ENCODE measurements at regions of chr4 and their contacts with region 1.

Region 1: GRCh38 chr4:1167247-1167949 is 5.0 kb downstream of the SPON2 start:
- DNase-seq: peak; percentile 21
- H3K4me3 ChIP-seq: peak overlapping the region; percentile 70
- CTCF ChIP-seq: peak; percentile 94

Region 2: DNA sequence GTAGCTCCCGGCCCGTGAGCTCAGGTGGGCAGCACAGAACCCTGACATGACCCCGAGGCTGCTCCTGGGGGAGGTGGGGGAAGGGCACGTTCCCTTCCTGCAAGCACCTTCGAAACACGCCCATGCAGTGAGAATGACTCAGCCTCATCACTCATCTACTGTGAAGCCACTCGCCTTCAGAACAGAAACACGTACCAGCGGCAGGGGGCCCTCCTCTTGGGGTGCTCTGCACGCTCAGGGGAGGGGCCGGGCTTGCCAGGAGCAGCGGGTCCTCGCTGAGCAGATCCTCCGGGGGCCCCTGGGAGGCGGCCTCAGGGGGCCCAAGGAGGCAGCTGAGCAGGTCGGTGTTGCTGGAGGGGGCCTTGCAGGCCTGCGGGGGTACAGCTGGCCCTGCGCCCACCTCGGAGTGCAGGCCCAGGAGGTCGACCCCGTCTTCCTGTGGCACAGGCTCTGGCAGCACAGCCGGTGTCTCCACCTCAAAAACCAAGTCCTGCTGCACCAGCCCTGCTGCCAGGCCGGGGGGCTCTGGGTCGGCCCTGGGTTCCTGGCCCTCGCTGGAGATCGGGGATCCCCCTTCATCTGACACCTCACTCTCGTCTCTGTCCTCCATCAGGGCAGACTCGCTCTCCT is 300.5 kb before region 1 on chr4:
- CTCF ChIA-PET with region 1: no interaction called
- POLR2A ChIA-PET with region 1: no interaction called
- DNase-seq: no peak
- H3K4me3 ChIP-seq: no peak overlapping the region
- CTCF ChIP-seq: no peak

Region 3: DNA sequence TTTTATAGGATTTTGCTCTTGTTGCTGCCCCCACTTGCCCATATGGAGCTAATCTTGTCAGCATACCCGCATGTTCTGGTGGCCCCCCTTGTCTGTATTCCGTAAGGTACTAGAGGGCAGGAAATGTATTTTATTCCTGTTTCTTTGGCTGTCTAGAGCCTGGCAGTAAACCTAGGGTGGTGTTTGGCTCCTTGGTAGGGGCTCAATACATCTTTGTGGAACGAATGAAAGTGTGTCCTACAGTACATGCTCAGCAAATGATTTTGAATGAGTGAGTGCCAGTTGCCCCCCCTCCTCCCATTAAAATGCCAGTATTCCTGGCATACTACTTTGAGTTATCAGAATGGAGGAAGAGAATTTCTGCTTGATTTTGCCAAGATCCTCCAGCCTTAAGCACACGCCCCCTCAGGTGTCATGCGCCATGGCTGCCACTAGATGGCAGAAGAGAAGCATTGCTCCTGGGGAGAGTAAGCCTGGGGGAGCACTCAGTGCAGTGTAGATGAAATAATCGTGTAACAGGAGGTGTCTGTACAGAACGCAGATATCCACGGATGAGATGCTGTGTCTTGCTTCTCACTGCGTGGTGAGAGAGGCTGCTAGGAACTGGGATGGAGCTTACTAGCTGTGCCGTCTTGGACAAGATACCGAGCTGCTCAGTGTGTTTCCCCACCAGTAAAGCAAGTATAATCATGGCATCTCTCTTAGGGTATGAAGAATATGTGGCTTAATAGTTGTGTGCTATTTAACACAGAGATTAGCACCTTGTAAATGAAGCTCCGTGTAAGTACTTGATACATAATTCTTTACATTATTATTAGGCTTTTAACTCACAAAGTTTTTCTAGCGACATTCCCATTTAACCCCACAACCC is 36.8 kb before region 1 on chr4:
- CTCF ChIA-PET with region 1: interaction called, 38 read pairs
- POLR2A ChIA-PET with region 1: no interaction called
- DNase-seq: no peak
- H3K4me3 ChIP-seq: no peak overlapping the region
- CTCF ChIP-seq: peak; percentile 99

Region 4: GRCh38 chr4:1177274-1178141 is 10.1 kb after region 1 on chr4:
- CTCF ChIA-PET with region 1: interaction called, 29 read pairs
- POLR2A ChIA-PET with region 1: no interaction called
- DNase-seq: no peak
- H3K4me3 ChIP-seq: no peak overlapping the region
- CTCF ChIP-seq: no peak

Region 5: GRCh38 chr4:1204828-1205585 is 37.6 kb after region 1 on chr4:
- CTCF ChIA-PET with region 1: interaction called, 10 read pairs
- POLR2A ChIA-PET with region 1: no interaction called
- DNase-seq: no peak
- H3K4me3 ChIP-seq: no peak overlapping the region
- CTCF ChIP-seq: no peak

Region 6: DNA sequence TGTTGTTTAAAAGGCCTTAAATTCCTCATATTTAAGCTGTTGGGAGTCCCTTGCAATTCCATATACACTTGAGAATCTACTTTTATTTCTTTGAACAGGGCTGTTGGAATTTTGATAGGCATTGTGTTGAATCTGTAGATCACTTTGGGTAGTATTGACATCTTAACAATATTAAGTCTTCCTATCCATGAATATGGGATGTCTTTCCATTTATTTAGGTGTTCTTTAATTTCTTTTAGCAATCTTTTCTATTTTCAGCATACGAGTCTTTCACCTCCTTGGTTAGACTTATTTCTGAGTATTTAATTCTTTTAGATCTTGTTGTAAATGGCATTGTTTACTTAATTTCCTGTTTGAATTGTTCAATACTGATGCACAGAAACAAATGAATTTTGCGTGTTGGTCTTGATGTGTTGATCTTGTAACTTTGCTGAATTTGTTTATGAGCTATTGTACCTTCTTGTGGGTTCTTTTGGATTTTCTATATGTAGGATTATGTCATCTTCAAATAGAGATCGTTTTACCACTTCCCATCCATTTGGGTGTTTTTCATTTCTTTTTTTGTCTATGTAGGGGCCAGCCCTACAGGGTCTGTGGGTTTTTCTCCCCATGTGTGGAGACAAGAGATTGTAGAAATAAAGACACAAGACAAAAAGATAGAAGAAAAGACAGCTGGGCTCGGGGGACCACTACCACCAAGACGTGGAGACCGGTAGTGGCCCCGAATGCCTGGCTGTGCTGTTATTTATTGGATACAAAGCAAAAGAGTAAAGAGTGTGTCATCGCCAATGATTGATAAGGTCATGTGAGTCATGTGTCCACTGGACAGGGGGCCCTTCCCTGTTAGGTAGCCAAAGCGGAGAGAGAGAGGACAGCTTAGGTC is 99.7 kb after region 1 on chr4:
- CTCF ChIA-PET with region 1: interaction called, 64 read pairs
- POLR2A ChIA-PET with region 1: no interaction called
- DNase-seq: no peak
- H3K4me3 ChIP-seq: no peak overlapping the region
- CTCF ChIP-seq: no peak

Measured in AG04449 (cell line).